T-cell (primary cell): ENCODE measurements at regions of chr13 and their contacts with region 1.

Region 1: DNA sequence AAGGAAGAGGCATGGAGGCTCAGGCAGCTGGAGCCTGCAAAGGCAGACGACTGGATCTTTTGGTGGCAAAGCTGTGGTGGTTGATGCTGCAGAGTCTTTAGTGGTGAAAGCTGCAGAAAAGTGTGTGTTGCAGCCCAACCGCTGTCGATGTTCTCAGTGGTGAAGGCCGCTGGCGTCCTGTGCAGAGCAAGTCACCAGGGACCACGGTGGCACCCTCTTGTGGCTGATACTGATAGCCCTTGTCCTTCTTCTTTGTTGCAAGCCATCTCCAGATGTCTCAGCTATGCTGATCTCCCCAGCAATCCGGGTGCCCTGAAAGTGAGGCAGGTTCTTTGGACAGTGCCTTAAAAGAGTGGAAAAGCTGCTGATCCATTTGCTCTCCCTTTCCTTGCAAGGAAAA is 610.9 kb upstream of the PCDH9 start:
- DNase-seq: no peak
- ATAC-seq: no peak
- H3K4me3 ChIP-seq: no peak overlapping the region
- H3K4me3 Mint-ChIP-seq: no peak overlapping the region
- H3K27ac ChIP-seq: no peak overlapping the region
- H3K27ac Mint-ChIP-seq: no peak overlapping the region
- H3K4me1 ChIP-seq: no peaks in the 10 kb centered on the region
- H3K4me1 Mint-ChIP-seq: no peaks in the 10 kb centered on the region
- H3K27me3 ChIP-seq: no peaks in the 10 kb centered on the region
- H3K27me3 Mint-ChIP-seq: no peaks in the 10 kb centered on the region

Region 2: DNA sequence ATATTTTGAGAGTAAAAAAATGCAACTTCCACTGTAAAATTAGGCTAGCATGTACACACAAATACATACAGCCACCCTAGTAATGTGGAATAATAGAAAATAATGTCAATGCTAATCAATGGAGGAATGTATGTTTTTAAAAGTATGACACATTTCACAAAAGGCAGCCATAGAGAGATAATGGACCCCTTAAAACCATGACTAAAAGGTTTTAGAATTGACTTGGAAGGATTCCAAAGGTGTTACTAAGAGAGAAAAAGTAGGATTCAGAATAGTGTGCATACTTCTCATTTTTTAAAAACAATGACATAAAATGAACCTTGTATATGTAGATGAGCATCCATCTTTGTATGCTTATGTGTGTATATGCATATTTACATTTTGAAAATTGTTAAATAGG is 13.1 kb before region 1 on chr13:
- CTCF ChIA-PET with region 1: no interaction called
- POLR2A ChIA-PET with region 1: interaction called in 1 of 2 experiments, 17 read pairs
- DNase-seq: no peak
- ATAC-seq: no peak
- H3K4me3 ChIP-seq: no peak overlapping the region
- H3K4me3 Mint-ChIP-seq: no peak overlapping the region
- H3K27ac ChIP-seq: no peak overlapping the region
- H3K27ac Mint-ChIP-seq: no peak overlapping the region
- H3K4me1 ChIP-seq: no peaks in the 10 kb centered on the region
- H3K4me1 Mint-ChIP-seq: no peaks in the 10 kb centered on the region
- H3K27me3 ChIP-seq: no peaks in the 10 kb centered on the region
- H3K27me3 Mint-ChIP-seq: no peaks in the 10 kb centered on the region